Activated CD8-positive, alpha-beta memory T cell treated with anti-CD3 and anti-CD28 coated beads, Interleukin-2, amount 10 ng/mL, durations not matched to agents 7 days and 5 days (primary cell): ENCODE measurements at regions of chr5 and their contacts with region 1.

Region 1: DNA sequence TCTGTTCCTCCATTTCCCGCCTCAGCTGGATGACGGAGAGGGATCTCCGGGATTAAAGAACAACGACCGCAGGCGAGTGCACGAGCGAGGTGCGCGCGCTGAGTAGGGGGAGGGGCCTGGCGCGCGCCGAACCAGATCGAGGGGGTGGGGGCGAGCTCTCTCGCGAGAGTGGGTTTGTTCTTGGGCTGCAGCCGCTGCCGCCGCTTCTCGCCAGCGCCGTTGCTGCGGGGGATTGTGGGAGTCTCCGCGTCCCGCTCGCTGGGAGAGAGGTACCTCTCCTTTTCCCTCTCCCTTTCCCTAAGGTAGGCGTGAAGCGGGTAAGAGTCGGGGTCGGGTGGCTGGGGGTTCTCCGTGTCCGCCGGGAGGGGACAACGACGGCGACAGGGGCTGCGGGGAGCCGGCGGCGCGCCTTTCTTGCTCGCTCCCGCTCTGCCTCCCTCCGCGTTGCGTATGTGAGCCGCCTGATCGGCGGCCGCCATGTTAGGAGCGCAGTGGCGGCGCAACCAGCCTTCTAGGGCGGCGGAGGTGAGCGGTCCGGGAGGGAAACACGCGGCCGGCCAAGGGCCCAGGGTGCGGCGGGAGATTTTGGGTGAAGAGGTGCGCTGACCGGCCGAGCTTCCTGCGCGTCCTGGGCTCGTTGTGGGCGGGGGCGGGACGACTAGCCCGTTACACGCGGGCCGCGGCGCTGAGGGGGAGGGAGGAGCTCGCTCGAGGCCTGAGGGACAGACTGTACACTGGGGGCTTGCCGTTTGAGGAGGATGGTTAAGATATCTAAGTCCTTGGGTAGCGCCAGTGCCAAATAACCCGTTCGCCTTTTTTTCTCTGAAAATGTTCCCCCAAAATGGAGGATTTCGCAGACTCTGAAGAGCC is at the start of gene MATR3:
- DNase-seq: peak; percentile 96
- ATAC-seq: peak; percentile 88
- H3K4me3 Mint-ChIP-seq: peak within 1 kb of the TSS; percentile 100
- H3K27ac Mint-ChIP-seq: peak within 1 kb of the TSS; percentile 99
- H3K4me1 Mint-ChIP-seq: peaks cover 38% of the 10 kb centered on the region
- H3K27me3 Mint-ChIP-seq: no peaks in the 10 kb centered on the region
- total RNA-seq, gene MATR3: 149 to 195 TPM

Region 2: GRCh38 chr5:139306197-139306596 is 12.5 kb after region 1 on chr5:
- CTCF ChIA-PET with region 1: interaction called, 28 read pairs
- DNase-seq: no peak
- ATAC-seq: peak; percentile 29
- H3K4me3 Mint-ChIP-seq: no peak overlapping the region
- H3K27ac Mint-ChIP-seq: peak overlapping the region; percentile 58
- H3K4me1 Mint-ChIP-seq: peaks cover 76% of the 10 kb centered on the region
- H3K27me3 Mint-ChIP-seq: no peaks in the 10 kb centered on the region

Region 3: GRCh38 chr5:139341650-139342422 is 48.1 kb after region 1 on chr5 and contains the start of gene PAIP2:
- CTCF ChIA-PET with region 1: interaction called, 10 read pairs
- DNase-seq: peak; percentile 98
- ATAC-seq: peak; percentile 92
- H3K4me3 Mint-ChIP-seq: peak within 1 kb of the TSS; percentile 100
- H3K27ac Mint-ChIP-seq: peak within 1 kb of the TSS; percentile 99
- H3K4me1 Mint-ChIP-seq: peaks cover 42% of the 10 kb centered on the region
- H3K27me3 Mint-ChIP-seq: no peaks in the 10 kb centered on the region
- total RNA-seq, gene PAIP2: 83.4 to 112 TPM